H1 (cell line): ENCODE measurements at regions of chr11 and their contacts with region 1.

Region 1: DNA sequence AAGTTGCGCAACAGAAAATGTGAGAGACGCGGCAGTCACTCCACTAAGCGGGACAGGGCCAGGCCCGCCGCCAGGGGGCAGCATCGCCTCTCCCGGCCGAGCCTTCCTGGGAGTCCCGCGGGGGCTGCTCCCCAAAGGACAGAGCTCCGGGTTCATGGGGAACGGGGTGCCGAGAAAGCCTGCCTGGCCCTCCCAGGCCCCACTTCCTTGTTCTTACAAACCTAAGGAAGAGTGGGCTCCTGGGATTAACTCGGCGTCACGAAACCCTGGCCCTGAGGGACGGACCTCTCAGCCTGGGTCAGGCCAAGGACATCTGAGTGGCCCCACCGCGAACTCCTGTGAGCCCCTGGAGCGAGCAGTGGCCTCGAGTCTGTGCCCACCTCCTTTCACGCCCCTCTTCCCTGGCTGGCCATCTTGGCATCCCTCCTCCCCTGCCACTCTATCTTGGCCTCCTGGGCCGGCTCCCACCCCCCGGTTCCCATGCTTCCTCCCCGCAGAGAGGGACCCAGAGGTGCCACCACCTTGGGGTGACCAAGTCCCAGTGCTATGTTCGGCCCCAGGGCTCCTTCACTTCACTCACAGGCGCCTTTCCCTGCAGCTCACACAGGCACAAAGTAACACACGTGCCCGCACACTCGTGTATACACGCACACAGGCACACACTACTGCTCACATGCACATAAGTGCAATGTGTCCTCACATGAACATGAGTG is 99.9 kb upstream of the FGF3 start:
- DNase-seq: peak; percentile 38 to 99
- H3K4me3 ChIP-seq: no peak overlapping the region
- H3K27ac ChIP-seq: no peak overlapping the region
- H3K4me1 ChIP-seq: peaks cover 0 to 3% (median 1%) of the 10 kb centered on the region in 4 experiments; a peak in 5 of 7 replicates
- H3K27me3 ChIP-seq: peaks cover 1 to 19% (median 10%) of the 10 kb centered on the region in 4 experiments; a peak in 6 of 7 replicates
- CTCF ChIP-seq: peak; percentile 89 to 94 (median 93)
- EP300 ChIP-seq: no peak
- POLR2A ChIP-seq: no peak
- RAD21 ChIP-seq: peak; percentile 83 to 89

Region 2: GRCh38 chr11:69867738-69868493 is 51.2 kb before region 1 on chr11:
- CTCF ChIA-PET with region 1: no interaction called
- POLR2A ChIA-PET with region 1: no interaction called
- DNase-seq: no peak
- H3K4me3 ChIP-seq: no peak overlapping the region
- H3K27ac ChIP-seq: no peak overlapping the region
- H3K4me1 ChIP-seq: peaks cover 0 to 18% (median 9%) of the 10 kb centered on the region in 4 experiments; a peak in 5 of 7 replicates
- H3K27me3 ChIP-seq: peaks cover 0 to 3% (median 1%) of the 10 kb centered on the region in 4 experiments; a peak in 2 of 7 replicates
- CTCF ChIP-seq: no peak
- EP300 ChIP-seq: no peak
- POLR2A ChIP-seq: no peak
- RAD21 ChIP-seq: no peak

Region 3: DNA sequence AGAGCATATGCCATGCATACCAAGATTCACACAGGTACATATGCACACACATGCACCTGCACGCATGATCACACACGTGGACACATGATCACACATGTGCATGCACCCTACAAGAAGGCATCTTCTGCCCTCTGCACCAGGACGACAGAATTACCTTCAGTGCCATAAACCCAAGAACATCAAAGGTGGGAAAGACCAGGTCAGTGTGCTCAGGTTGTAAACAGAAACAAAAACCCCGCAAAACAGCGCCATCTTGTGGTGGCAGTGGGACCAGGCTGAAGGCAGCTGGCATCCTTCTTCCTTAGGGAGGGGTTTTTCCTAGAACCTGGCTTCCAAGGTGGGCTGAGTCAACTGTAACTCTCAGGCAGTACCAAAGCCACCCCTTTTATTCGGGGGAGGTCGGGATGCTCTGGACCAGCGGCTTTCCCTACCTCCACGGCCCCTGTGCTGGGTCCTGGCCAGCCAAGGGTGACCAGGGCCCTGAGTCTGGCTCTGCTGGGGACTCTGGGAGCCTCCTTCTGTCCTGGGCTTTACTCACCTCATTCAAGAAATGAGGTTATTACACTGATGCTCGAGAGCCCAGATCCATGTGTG is 30.5 kb before region 1 on chr11:
- CTCF ChIA-PET with region 1: interaction called, 173 read pairs
- POLR2A ChIA-PET with region 1: interaction called, 3 read pairs
- DNase-seq: peak; percentile 75 to 96
- H3K4me3 ChIP-seq: no peak overlapping the region
- H3K27ac ChIP-seq: no peak overlapping the region
- H3K4me1 ChIP-seq: peaks cover 8 to 24% (median 10%) of the 10 kb centered on the region in 4 experiments
- H3K27me3 ChIP-seq: peaks cover 0 to 28% (median 12%) of the 10 kb centered on the region in 4 experiments; a peak in 5 of 7 replicates
- CTCF ChIP-seq: peak; percentile 93 to 100 (median 97)
- EP300 ChIP-seq: no peak
- POLR2A ChIP-seq: no peak
- RAD21 ChIP-seq: peak; percentile 76 to 84

Region 4: GRCh38 chr11:69899957-69900821 is 18.9 kb before region 1 on chr11:
- CTCF ChIA-PET with region 1: interaction called, 173 read pairs
- POLR2A ChIA-PET with region 1: no interaction called
- DNase-seq: no peak
- H3K4me3 ChIP-seq: no peak overlapping the region
- H3K27ac ChIP-seq: no peak overlapping the region
- H3K4me1 ChIP-seq: no peaks in the 10 kb centered on the region
- H3K27me3 ChIP-seq: no peaks in the 10 kb centered on the region
- CTCF ChIP-seq: no peak
- EP300 ChIP-seq: no peak
- POLR2A ChIP-seq: no peak
- RAD21 ChIP-seq: no peak

Region 5: GRCh38 chr11:69943066-69943465 is 24.0 kb after region 1 on chr11:
- CTCF ChIA-PET with region 1: interaction called, 34 read pairs
- POLR2A ChIA-PET with region 1: no interaction called
- DNase-seq: no peak
- H3K4me3 ChIP-seq: no peak overlapping the region
- H3K27ac ChIP-seq: no peak overlapping the region
- H3K4me1 ChIP-seq: peaks cover 0 to 4% (median 3%) of the 10 kb centered on the region in 4 experiments; a peak in 3 of 7 replicates
- H3K27me3 ChIP-seq: no peaks in the 10 kb centered on the region; a peak in 1 of 7 replicates
- CTCF ChIP-seq: peak; percentile 33 to 56 (median 46)
- EP300 ChIP-seq: no peak
- POLR2A ChIP-seq: no peak
- RAD21 ChIP-seq: peak; percentile 52 to 67

Region 6: DNA sequence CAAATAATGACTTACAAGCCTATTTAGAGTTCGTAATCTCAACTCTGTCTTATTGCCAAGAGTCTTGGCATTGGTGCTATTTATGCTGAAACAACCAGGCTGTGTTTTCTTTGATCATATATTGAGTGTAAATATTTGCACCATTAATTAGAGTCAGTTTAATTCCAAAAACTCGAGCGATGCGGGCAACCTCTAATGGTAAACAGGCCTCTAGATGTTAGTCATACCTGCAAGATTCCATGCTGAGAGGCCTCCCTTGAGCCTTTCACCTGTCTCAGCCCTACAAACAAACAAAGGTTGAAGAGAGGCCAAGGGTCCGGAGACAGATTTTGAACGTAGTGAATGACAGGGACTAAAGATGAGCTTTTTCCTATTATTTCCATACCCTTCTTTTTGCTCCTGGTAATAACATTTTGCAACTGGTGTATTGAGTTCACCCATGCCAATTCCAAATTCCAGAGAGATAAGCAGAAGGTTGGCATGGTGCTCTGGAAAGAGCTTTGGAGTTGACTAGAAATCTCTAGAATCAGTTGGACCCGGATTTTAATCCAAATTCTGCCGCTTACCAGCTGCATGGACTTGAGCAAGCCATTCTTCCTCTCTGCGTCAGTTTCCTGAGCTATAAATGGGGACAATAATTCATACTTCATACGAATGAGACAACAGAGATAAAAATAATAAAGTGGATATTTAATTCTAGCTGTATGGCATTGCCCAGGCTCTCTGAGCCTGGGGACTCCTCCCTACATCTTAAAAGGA is 59.9 kb after region 1 on chr11:
- CTCF ChIA-PET with region 1: interaction called, 10 read pairs
- POLR2A ChIA-PET with region 1: no interaction called
- DNase-seq: no peak
- H3K4me3 ChIP-seq: no peak overlapping the region
- H3K27ac ChIP-seq: no peak overlapping the region
- H3K4me1 ChIP-seq: peaks cover 5 to 18% (median 7%) of the 10 kb centered on the region in 4 experiments
- H3K27me3 ChIP-seq: peaks cover 0 to 2% (median under 1%) of the 10 kb centered on the region in 4 experiments; a peak in 6 of 7 replicates
- CTCF ChIP-seq: no peak
- EP300 ChIP-seq: no peak
- POLR2A ChIP-seq: no peak
- RAD21 ChIP-seq: no peak

Region 7: DNA sequence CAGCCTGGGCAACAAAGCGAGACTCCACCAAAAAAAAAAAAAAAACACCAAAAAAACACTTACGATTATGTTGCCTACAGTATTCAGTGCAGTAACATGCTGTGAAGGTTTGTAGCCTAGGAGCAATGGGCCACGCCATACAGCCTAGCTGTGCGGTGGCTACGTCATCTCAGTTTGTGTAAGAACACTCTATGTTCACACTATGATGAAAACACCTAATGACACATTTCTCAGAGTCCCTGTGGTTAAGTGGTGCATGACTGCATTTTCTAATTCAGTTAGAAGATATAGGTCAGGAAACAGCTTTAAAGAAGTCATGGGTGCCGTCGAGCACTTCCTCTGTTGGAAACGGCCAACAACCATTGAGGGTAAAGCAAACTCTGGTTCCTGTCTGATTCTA is 83.3 kb after region 1 on chr11:
- CTCF ChIA-PET with region 1: no interaction called
- POLR2A ChIA-PET with region 1: no interaction called
- DNase-seq: no peak
- H3K4me3 ChIP-seq: no peak overlapping the region
- H3K27ac ChIP-seq: no peak overlapping the region
- H3K4me1 ChIP-seq: peaks cover 0 to 10% (median 4%) of the 10 kb centered on the region in 4 experiments; a peak in 3 of 7 replicates
- H3K27me3 ChIP-seq: peaks cover 1 to 26% (median 16%) of the 10 kb centered on the region in 4 experiments
- CTCF ChIP-seq: no peak
- EP300 ChIP-seq: no peak
- POLR2A ChIP-seq: no peak
- RAD21 ChIP-seq: no peak

Region 8: GRCh38 chr11:70016666-70017367 is 97.7 kb after region 1 on chr11:
- CTCF ChIA-PET with region 1: no interaction called
- POLR2A ChIA-PET with region 1: no interaction called
- DNase-seq: no peak
- H3K4me3 ChIP-seq: no peak overlapping the region
- H3K27ac ChIP-seq: no peak overlapping the region
- H3K4me1 ChIP-seq: no peaks in the 10 kb centered on the region
- H3K27me3 ChIP-seq: no peaks in the 10 kb centered on the region
- CTCF ChIP-seq: no peak
- EP300 ChIP-seq: no peak
- POLR2A ChIP-seq: no peak
- RAD21 ChIP-seq: no peak

Region 9: DNA sequence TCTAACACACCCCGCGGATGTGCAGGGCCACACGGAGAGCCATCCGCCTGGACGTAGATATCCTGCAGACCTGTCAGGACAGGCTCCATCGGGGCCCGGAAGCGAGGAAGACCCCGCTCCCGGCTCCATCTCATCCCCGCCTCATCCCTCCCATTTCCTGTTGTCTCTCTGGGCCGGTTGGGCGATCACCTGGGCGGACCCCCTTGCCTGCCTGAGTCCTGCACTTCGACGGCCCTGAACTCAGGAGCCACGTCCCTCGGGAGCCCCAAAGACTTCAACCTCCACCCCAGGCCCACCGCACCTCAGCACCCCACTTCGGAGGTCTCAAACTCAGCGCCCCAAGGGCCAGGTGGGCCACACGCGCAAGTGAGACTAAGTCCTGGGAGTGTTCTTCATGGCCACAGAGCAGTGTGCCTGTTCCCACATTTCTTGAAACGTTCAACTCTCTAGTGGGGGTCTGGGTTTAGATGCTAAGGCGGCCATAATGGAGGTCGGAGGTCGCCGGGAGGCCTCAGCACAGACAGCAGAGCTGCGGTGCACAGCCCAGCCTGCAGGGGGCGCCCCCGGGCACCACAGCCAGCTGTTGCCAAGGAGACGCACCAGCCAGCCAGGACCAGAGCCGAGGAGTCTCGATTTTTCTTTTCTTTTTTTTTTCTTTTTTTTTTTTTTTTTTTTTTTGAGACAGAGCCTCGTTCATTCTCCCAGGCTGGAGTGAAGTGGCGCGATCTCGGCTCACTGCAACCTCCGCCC is 258.0 kb after region 1 on chr11:
- CTCF ChIA-PET with region 1: interaction called, 15 read pairs
- POLR2A ChIA-PET with region 1: no interaction called
- DNase-seq: peak; percentile 27 to 97
- H3K4me3 ChIP-seq: no peak overlapping the region
- H3K27ac ChIP-seq: no peak overlapping the region
- H3K4me1 ChIP-seq: peaks cover 0 to 7% (median 2%) of the 10 kb centered on the region in 4 experiments; a peak in 4 of 7 replicates
- H3K27me3 ChIP-seq: no peaks in the 10 kb centered on the region
- CTCF ChIP-seq: peak; percentile 77 to 94 (median 83)
- EP300 ChIP-seq: no peak
- POLR2A ChIP-seq: no peak
- RAD21 ChIP-seq: peak; percentile 18 to 39; a peak in 3 of 4 replicates

Region 10: GRCh38 chr11:70191495-70192140 is 272.5 kb after region 1 on chr11:
- CTCF ChIA-PET with region 1: interaction called, 47 read pairs
- POLR2A ChIA-PET with region 1: no interaction called
- DNase-seq: peak; percentile 59 to 97
- H3K4me3 ChIP-seq: no peak overlapping the region
- H3K27ac ChIP-seq: no peak overlapping the region
- H3K4me1 ChIP-seq: no peaks in the 10 kb centered on the region
- H3K27me3 ChIP-seq: no peaks in the 10 kb centered on the region
- CTCF ChIP-seq: peak; percentile 94 to 99 (median 98)
- EP300 ChIP-seq: no peak
- POLR2A ChIP-seq: no peak
- RAD21 ChIP-seq: peak; percentile 98 to 100